ENCODE measurements at regions of chr21 and their contacts with region 1.

Region 1: GRCh38 chr21:36141513-36141925 is 6.6 kb downstream of the CBR3 start:
- DNase-seq: peak; percentile 87
- H3K4me3 Mint-ChIP-seq: no peak overlapping the region
- H3K27ac Mint-ChIP-seq: peak overlapping the region; percentile 44
- H3K4me1 Mint-ChIP-seq: peaks cover 51% of the 10 kb centered on the region
- H3K27me3 Mint-ChIP-seq: no peaks in the 10 kb centered on the region

Region 2: DNA sequence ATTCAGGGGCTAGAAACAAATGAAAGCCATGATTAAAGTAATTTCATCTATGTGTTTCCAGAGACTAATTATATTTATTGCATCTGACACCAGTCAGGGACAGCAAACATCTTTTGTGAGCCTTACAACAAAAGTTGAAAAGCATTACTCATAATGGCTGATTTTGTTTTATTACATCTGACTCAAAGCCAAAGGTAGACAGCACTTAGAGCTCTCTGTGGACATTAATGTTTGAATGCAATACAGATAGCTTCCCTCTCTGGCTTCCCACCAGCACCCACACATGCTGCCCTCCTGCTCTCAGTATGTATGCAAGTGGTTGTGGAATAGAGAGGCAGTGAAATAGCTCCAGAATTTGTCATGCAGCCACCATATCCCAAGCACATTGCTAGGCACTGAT is 279.9 kb before region 1 on chr21:
- CTCF ChIA-PET with region 1: no interaction called
- POLR2A ChIA-PET with region 1: no interaction called
- DNase-seq: no peak
- H3K4me3 Mint-ChIP-seq: no peak overlapping the region
- H3K27ac Mint-ChIP-seq: no peak overlapping the region
- H3K4me1 Mint-ChIP-seq: no peaks in the 10 kb centered on the region
- H3K27me3 Mint-ChIP-seq: peaks cover 16% of the 10 kb centered on the region

Region 3: GRCh38 chr21:36104317-36105300 is 36.9 kb before region 1 on chr21:
- CTCF ChIA-PET with region 1: no interaction called
- POLR2A ChIA-PET with region 1: no interaction called
- DNase-seq: peak; percentile 25
- H3K4me3 Mint-ChIP-seq: no peak overlapping the region
- H3K27ac Mint-ChIP-seq: no peak overlapping the region
- H3K4me1 Mint-ChIP-seq: peaks cover 6% of the 10 kb centered on the region
- H3K27me3 Mint-ChIP-seq: peaks cover 62% of the 10 kb centered on the region

Region 4: GRCh38 chr21:36156339-36156814 is 14.9 kb after region 1 on chr21:
- CTCF ChIA-PET with region 1: interaction called, 27 read pairs
- POLR2A ChIA-PET with region 1: interaction called, 20 read pairs
- DNase-seq: peak; percentile 100
- H3K4me3 Mint-ChIP-seq: peak overlapping the region; percentile 80
- H3K27ac Mint-ChIP-seq: peak overlapping the region; percentile 31
- H3K4me1 Mint-ChIP-seq: peaks cover 41% of the 10 kb centered on the region
- H3K27me3 Mint-ChIP-seq: peaks cover 6% of the 10 kb centered on the region

Region 5: GRCh38 chr21:36174780-36175179 is 33.3 kb after region 1 on chr21:
- CTCF ChIA-PET with region 1: interaction called, 20 read pairs
- POLR2A ChIA-PET with region 1: interaction called, 10 read pairs
- DNase-seq: no peak
- H3K4me3 Mint-ChIP-seq: no peak overlapping the region
- H3K27ac Mint-ChIP-seq: peak overlapping the region; percentile 93
- H3K4me1 Mint-ChIP-seq: peaks cover 36% of the 10 kb centered on the region
- H3K27me3 Mint-ChIP-seq: no peaks in the 10 kb centered on the region

Region 6: GRCh38 chr21:36209626-36210171 is 68.2 kb after region 1 on chr21:
- CTCF ChIA-PET with region 1: interaction called, 51 read pairs
- POLR2A ChIA-PET with region 1: interaction called, 9 read pairs
- DNase-seq: peak; percentile 68
- H3K4me3 Mint-ChIP-seq: no peak overlapping the region
- H3K27ac Mint-ChIP-seq: no peak overlapping the region
- H3K4me1 Mint-ChIP-seq: peaks cover 37% of the 10 kb centered on the region
- H3K27me3 Mint-ChIP-seq: no peaks in the 10 kb centered on the region

Region 7: DNA sequence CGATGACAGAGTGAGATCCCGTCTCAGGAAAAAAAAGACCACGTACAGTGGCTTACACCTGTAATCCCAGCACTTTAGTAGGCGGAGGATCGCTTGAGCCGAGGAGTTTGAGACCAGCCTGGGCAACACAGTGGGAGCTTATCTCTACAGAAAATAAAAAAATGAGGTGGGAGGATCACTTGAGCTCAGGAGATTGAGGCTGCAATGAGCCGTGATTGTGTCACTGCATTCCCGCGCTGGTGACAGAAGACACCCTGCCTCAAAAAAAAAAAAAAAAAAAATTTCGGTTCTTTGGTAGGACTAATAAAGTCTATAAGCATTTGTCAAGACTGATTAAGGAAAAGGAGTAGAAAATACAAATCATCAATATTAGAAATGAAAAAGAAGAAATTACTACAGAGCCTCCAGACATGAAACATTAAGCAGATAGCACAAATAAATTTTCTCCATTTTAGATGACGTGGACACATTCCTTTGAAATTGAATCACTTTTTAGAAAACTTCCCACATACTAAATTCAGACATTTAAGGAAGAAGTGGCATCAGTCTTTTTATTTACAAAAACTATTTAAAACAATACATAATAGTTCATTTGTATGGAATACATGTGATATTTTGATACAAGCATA is 208.9 kb after region 1 on chr21:
- CTCF ChIA-PET with region 1: interaction called, 10 read pairs
- POLR2A ChIA-PET with region 1: no interaction called
- DNase-seq: no peak
- H3K4me3 Mint-ChIP-seq: no peak overlapping the region
- H3K27ac Mint-ChIP-seq: no peak overlapping the region
- H3K4me1 Mint-ChIP-seq: peaks cover 7% of the 10 kb centered on the region
- H3K27me3 Mint-ChIP-seq: no peaks in the 10 kb centered on the region

Measured in activated CD4-positive, alpha-beta memory T cell treated with anti-CD3 and anti-CD28 coated beads, Interleukin-2, amount 10 ng/mL, durations not matched to agents 7 days and 5 days (primary cell).